ENCODE measurements at regions of chr2 and their contacts with region 1.

Region 1: GRCh38 chr2:219073413-219074129 is 12.8 kb upstream of the IHH start:
- H3K4me3 ChIP-seq: no peak overlapping the region
- H3K27ac ChIP-seq: no peak overlapping the region
- H3K4me1 ChIP-seq: no peaks in the 10 kb centered on the region
- CTCF ChIP-seq: no peak

Region 2: DNA sequence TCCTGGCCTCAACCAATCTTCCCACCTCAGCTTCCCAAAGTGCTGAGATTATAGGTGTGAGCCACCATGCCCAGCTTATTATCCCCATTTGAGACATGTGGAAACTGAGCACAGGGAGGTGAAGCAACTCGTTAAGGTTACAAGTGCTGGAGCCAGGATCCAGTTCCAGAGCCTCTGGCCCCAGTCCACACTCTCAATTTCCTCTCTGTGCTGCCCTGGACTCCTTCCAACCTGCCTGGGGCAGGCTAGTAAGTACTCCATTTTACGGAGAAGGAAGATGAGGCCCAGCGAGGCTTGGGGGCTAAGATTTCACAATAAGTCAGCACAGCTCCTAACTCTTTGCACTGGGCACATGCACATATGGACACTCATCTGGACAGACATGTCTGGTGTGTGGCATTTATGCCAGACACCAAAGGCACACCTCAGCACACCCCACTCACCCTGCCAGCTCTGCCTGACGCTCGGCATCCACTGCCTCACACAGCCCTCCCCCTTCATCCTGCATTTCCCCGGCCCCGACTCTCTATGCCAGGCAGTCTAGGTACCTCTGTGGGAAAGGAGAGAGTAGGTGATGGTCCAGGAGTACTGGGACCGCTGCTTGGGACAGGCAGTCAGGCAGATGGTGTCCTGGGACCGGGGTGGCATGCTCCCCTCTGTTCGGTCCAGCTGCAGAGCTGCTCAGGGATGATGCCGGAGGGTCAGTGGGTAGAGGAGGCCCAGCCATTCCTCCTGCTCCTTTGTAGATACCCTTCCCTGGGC is 52.8 kb before region 1 on chr2:
- CTCF ChIA-PET with region 1: no interaction called
- POLR2A ChIA-PET with region 1: no interaction called
- H3K4me3 ChIP-seq: no peak overlapping the region
- H3K27ac ChIP-seq: no peak overlapping the region
- H3K4me1 ChIP-seq: no peaks in the 10 kb centered on the region
- CTCF ChIP-seq: no peak

Region 3: GRCh38 chr2:219057709-219058540 is 15.6 kb before region 1 on chr2:
- CTCF ChIA-PET with region 1: interaction called, 66 read pairs
- POLR2A ChIA-PET with region 1: no interaction called
- H3K4me3 ChIP-seq: no peak overlapping the region
- H3K27ac ChIP-seq: no peak overlapping the region
- H3K4me1 ChIP-seq: no peaks in the 10 kb centered on the region; the same call in 1 of the 2 replicates
- CTCF ChIP-seq: peak; percentile 93

Region 4: GRCh38 chr2:219087361-219087760 is 13.8 kb after region 1 on chr2:
- CTCF ChIA-PET with region 1: interaction called, 21 read pairs
- POLR2A ChIA-PET with region 1: no interaction called
- H3K4me3 ChIP-seq: no peak overlapping the region
- H3K27ac ChIP-seq: no peak overlapping the region
- H3K4me1 ChIP-seq: no peaks in the 10 kb centered on the region
- CTCF ChIP-seq: no peak

Region 5: GRCh38 chr2:219104107-219105035 is 30.8 kb after region 1 on chr2:
- CTCF ChIA-PET with region 1: interaction called, 56 read pairs
- POLR2A ChIA-PET with region 1: no interaction called
- H3K4me3 ChIP-seq: no peak overlapping the region
- H3K27ac ChIP-seq: no peak overlapping the region
- H3K4me1 ChIP-seq: no peaks in the 10 kb centered on the region
- CTCF ChIP-seq: peak; percentile 31

Region 6: DNA sequence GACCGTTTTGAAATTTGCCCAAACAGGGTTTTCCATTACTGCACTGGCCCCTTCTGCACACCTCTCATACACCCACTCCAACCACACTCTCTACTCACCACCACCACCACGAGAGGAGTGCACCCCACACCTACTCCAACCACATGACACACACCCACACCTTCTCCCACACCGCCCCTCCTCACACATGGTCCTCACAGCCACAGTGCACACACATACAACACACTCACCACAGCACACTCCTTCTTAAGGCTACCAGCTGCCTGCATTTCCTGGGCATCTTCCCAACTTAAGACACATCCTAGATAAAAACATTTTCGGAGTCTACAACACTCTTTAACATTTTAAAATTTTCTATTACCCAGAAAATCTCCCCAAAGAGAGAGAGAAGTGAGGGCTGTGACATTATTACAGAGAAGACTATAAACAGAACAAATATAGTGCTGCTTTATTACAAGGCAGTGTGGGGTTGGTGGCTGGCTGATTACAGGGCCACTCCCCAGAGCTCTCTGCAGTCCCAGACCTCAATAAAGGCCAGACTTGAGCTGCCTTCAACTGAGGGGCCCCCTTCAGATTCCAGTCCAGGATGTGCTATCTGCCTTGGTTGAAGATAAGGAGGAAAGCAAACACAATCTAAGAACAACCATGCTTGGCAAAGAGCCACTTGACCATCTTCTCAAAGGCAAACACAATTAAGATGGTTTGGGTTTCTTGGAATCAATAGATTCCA is 51.0 kb after region 1 on chr2:
- CTCF ChIA-PET with region 1: interaction called, 47 read pairs
- POLR2A ChIA-PET with region 1: no interaction called
- H3K4me3 ChIP-seq: no peak overlapping the region
- H3K27ac ChIP-seq: peak overlapping the region; percentile 63; the same call in 1 of the 2 replicates
- H3K4me1 ChIP-seq: peaks cover 59% of the 10 kb centered on the region
- CTCF ChIP-seq: no peak